GM23248 (cell line): ENCODE measurements at regions of chr7 and their contacts with region 1.

Region 1: DNA sequence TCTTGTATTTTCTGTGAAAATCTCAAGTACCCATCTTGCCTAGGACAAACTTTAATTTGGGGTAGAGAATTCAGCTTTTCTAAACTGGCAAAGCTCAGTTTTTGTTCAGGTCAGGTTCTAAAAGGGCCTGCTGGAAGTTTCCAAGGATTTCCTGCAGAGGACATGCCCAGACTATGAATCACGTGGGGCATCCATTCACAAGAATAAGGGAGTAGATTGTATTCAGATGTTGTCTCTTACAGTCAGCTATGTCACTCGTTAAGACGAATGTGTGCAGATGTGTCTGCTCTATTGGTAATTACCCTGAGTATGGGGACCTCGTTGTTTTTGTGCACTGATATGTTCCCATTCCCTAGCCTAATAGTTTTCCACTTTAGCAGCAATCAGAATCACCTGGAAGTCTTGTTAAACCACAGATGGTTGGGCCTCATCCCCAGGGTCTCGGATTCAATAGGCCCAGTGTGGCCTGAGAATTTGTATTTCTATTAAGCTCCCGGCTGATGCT is 81.0 kb upstream of the ITPRID1 start:
- DNase-seq: peak; percentile 7
- H3K4me3 ChIP-seq: no peak overlapping the region
- H3K27ac ChIP-seq: no peak overlapping the region
- H3K4me1 ChIP-seq: no peaks in the 10 kb centered on the region
- H3K27me3 ChIP-seq: no peaks in the 10 kb centered on the region

Region 2: DNA sequence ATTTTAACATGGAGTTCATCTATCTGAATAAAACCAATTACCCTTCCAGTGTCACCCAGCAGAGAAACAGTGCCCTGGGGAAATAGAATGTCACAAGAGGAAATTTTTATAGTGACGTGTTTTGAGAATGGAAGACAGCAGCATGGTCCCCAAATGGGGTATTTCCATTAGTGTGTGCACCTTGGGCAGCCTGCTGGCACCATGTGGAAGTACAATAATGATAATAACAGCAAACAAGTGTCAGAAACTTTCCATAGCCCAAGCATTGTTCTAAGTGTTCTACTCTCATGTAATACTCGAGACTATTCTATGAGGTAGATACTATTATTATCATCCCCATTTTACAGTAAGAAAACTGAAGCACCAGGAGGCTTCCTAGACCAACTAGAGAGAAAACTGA is 639.5 kb after region 1 on chr7:
- in situ Hi-C with region 1: no loop called
- DNase-seq: no peak
- H3K4me3 ChIP-seq: peak overlapping the region; percentile 83
- H3K27ac ChIP-seq: no peak overlapping the region
- H3K4me1 ChIP-seq: peaks cover 17% of the 10 kb centered on the region
- H3K27me3 ChIP-seq: no peaks in the 10 kb centered on the region

Region 3: DNA sequence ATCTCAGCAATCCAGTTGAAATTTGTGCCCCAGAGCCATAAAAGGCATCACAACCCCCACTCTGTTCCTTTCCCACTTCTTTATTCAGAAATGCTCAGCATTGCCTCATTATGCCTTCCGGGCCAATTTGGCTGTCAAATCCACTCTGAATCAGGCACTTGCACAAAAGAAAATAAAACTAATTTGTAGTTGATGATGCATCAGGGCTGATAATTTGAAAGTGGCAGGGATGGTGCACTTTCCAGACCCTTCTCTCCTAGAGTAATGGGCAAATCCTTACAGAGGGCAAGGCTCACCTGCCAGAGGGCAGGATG is 785.2 kb after region 1 on chr7:
- in situ Hi-C with region 1: loop called (anchors 10 kb)
- DNase-seq: no peak
- H3K4me3 ChIP-seq: no peak overlapping the region
- H3K27ac ChIP-seq: no peak overlapping the region
- H3K4me1 ChIP-seq: no peaks in the 10 kb centered on the region
- H3K27me3 ChIP-seq: peaks cover 14% of the 10 kb centered on the region; the same call in 1 of the 2 replicates